ENCODE measurements at regions of chr7 and their contacts with region 1.

Region 1: DNA sequence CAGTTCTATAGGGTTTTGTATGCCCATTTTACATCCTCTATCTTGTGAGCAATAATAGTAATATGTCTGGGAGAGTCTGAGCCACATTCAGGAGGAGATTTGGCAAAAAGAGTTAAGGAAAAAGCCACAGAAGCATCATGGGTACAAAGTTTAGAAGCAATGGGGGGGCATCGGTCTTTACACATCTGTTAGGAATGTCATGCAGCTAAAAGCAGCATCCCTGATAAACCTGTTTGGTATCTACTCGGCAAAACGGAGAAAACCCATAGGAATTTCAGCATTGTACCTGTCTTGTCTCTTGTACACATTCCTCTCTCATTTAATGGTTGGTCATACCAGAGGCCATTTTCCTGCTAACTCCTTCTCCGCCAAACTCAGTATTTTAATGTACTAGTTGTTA is 12.5 kb upstream of the HERPUD2 start:
- DNase-seq: no peak
- H3K4me3 ChIP-seq: no peak overlapping the region
- H3K27ac ChIP-seq: no peak overlapping the region
- H3K4me1 ChIP-seq: peaks cover 2 to 7% of the 10 kb centered on the region in 2 experiments; a peak in 3 of 4 replicates
- H3K27me3 ChIP-seq: no peaks in the 10 kb centered on the region
- CTCF ChIP-seq: no peak
- EP300 ChIP-seq: no peak
- RAD21 ChIP-seq: no peak

Region 2: GRCh38 chr7:35694781-35695472 is 12.5 kb before region 1 on chr7 and contains the start of gene HERPUD2:
- CTCF ChIA-PET with region 1: interaction called, 104 read pairs
- POLR2A ChIA-PET with region 1: interaction called, 4 read pairs
- DNase-seq: peak; percentile 99
- H3K4me3 ChIP-seq: peak within 1 kb of the TSS; percentile 92 to 100
- H3K27ac ChIP-seq: peak within 1 kb of the TSS; percentile 87 to 89
- H3K4me1 ChIP-seq: peaks cover 14 to 37% of the 10 kb centered on the region in 2 experiments; a peak in 3 of 4 replicates
- H3K27me3 ChIP-seq: no peaks in the 10 kb centered on the region
- CTCF ChIP-seq: no peak
- EP300 ChIP-seq: no peak
- RAD21 ChIP-seq: no peak
- polyA plus RNA-seq, gene HERPUD2: 39.2 and 48.3 TPM in 2 replicates